AG04450 (cell line): ENCODE measurements at regions of chr6 and their contacts with region 1.

Region 1: DNA sequence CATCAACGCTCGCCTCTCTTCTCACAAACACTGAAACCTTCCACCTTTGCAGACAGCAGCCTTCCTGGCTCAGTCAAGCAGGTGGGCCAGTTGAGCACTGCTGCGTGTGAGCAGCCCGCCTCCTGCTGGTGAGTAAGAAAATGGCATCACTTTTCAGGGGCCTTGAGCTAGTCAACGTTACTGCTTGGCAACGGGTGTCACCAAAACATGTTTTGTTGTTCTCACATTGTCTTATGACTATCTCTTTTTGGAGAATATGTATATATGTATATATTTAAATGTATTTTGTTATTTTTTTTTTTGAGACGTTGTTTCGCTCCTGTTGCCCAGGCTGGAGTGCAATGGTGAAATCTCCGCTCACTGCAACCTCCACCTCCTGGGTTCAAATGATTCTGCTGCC is 97.0 kb upstream of the AGPAT4 start:
- DNase-seq: peak; percentile 42
- H3K4me3 ChIP-seq: no peak overlapping the region
- H3K27ac ChIP-seq: no peak overlapping the region
- H3K27me3 ChIP-seq: no peaks in the 10 kb centered on the region
- CTCF ChIP-seq: peak; percentile 96

Region 2: DNA sequence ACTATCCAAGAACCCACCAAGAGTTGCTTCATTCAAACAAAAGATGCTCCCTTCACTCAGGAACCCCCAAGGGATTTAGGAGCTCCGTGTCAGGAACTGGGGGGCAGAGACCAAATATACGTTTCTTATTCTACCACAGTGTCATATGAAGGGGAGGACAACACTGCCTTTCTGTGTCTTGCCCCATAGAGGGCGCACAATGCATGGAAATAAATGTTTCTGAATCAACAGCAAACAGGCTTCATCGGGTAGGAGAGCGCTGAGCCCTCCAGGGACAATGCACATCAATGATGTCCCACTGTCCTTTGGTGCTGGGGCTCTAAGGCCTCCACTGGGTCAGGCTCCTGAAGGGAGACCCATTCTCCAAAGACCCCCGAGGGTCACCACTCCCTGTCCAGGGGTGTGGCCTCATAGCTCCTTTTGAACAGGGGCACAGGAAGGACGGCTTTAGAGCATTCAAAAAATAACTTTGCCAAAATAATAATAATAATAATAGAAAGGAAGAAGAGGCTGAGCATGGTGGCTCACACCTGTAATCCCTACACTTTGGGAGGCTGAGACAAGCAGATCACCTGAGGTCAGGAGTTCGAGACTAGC is 637.7 kb before region 1 on chr6:
- CTCF ChIA-PET with region 1: interaction called, 53 read pairs
- POLR2A ChIA-PET with region 1: no interaction called
- DNase-seq: no peak
- H3K4me3 ChIP-seq: no peak overlapping the region
- H3K27ac ChIP-seq: no peak overlapping the region
- H3K27me3 ChIP-seq: no peaks in the 10 kb centered on the region
- CTCF ChIP-seq: peak; percentile 55

Region 3: DNA sequence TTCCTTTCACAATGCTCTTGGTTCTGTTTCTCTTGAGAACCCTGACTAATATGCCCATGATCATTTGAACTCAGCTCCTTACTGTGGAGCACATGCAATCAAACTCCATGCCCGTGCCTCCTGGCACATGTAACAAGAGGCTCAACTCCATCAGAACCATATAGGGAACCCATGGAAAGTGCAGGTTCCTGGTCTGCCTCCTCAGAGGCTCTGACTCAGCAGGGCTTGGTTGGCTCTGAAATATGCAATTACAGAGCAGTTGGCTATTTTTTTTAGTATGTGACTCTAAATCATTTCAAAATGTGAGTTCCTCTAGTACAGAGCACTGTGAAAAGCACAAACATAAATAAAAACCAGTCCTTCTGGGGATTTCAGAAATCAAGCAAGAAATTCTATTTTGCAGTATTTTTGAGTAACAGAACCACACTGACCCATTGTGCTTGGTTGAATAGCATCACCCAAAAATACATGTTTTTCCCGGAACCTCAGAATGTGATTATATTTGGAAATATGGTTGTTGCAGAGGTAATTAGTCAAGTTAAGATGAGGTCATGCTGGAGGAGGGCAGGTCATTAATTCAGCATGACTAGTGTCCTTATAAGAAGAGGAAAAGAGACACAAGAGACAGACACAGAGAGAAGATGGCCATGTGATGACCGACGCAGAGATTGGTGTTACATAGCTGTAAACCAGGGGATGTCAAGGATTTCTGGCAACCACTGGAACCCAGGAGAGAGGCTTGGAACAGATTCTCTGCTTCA is 392.6 kb before region 1 on chr6:
- CTCF ChIA-PET with region 1: interaction called, 11 read pairs
- POLR2A ChIA-PET with region 1: no interaction called
- DNase-seq: no peak
- H3K4me3 ChIP-seq: no peak overlapping the region
- H3K27ac ChIP-seq: peak overlapping the region; percentile 57
- H3K27me3 ChIP-seq: no peaks in the 10 kb centered on the region
- CTCF ChIP-seq: no peak

Region 4: GRCh38 chr6:161057103-161058091 is 313.5 kb before region 1 on chr6:
- CTCF ChIA-PET with region 1: interaction called, 10 read pairs
- POLR2A ChIA-PET with region 1: no interaction called
- DNase-seq: no peak
- H3K4me3 ChIP-seq: no peak overlapping the region
- H3K27ac ChIP-seq: no peak overlapping the region
- H3K27me3 ChIP-seq: no peaks in the 10 kb centered on the region
- CTCF ChIP-seq: no peak

Region 5: GRCh38 chr6:161128680-161129196 is 242.1 kb before region 1 on chr6:
- CTCF ChIA-PET with region 1: interaction called, 23 read pairs
- POLR2A ChIA-PET with region 1: no interaction called
- DNase-seq: peak; percentile 58
- H3K4me3 ChIP-seq: no peak overlapping the region
- H3K27ac ChIP-seq: no peak overlapping the region
- H3K27me3 ChIP-seq: no peaks in the 10 kb centered on the region
- CTCF ChIP-seq: no peak

Region 6: GRCh38 chr6:161207200-161207599 is 163.7 kb before region 1 on chr6:
- CTCF ChIA-PET with region 1: interaction called, 11 read pairs
- POLR2A ChIA-PET with region 1: no interaction called
- DNase-seq: no peak
- H3K4me3 ChIP-seq: no peak overlapping the region
- H3K27ac ChIP-seq: no peak overlapping the region
- H3K27me3 ChIP-seq: no peaks in the 10 kb centered on the region
- CTCF ChIP-seq: no peak

Region 7: DNA sequence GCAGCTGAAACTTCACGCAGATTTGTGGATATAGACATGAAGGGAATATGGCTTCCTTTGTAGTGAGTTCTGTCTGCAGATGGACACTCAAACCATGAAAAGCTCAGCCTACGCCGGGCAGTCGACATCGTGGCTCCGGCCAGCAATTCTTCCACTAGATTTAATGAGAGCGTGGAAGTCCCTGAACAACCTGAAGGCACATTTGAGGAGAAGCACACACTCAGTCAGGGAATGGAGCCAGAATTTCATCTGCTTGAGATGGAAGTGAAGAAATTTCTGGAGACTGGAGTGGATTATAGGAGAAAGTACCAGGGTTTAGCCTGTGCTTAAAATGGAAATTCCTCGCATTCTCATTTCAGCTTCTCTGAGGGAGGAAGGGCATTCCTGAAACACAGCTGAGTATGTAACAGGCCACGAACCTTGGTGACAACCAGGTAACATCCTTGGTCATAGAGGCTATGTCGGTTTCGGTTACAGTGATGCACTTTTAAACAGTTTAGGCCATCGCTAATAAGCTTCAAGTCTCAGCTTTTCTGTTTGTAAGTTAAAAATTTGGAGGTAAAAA is 16.5 kb before region 1 on chr6:
- CTCF ChIA-PET with region 1: interaction called, 15 read pairs
- POLR2A ChIA-PET with region 1: no interaction called
- DNase-seq: no peak
- H3K4me3 ChIP-seq: no peak overlapping the region
- H3K27ac ChIP-seq: no peak overlapping the region
- H3K27me3 ChIP-seq: no peaks in the 10 kb centered on the region
- CTCF ChIP-seq: no peak

Region 8: GRCh38 chr6:161639772-161640171 is 268.9 kb after region 1 on chr6:
- CTCF ChIA-PET with region 1: no interaction called
- POLR2A ChIA-PET with region 1: no interaction called
- DNase-seq: no peak
- H3K4me3 ChIP-seq: no peak overlapping the region
- H3K27ac ChIP-seq: no peak overlapping the region
- H3K27me3 ChIP-seq: no peaks in the 10 kb centered on the region
- CTCF ChIP-seq: no peak

Region 9: GRCh38 chr6:161727083-161727833 is 356.4 kb after region 1 on chr6:
- CTCF ChIA-PET with region 1: no interaction called
- POLR2A ChIA-PET with region 1: no interaction called
- DNase-seq: no peak
- H3K4me3 ChIP-seq: no peak overlapping the region
- H3K27ac ChIP-seq: no peak overlapping the region
- H3K27me3 ChIP-seq: no peaks in the 10 kb centered on the region
- CTCF ChIP-seq: no peak

Region 10: DNA sequence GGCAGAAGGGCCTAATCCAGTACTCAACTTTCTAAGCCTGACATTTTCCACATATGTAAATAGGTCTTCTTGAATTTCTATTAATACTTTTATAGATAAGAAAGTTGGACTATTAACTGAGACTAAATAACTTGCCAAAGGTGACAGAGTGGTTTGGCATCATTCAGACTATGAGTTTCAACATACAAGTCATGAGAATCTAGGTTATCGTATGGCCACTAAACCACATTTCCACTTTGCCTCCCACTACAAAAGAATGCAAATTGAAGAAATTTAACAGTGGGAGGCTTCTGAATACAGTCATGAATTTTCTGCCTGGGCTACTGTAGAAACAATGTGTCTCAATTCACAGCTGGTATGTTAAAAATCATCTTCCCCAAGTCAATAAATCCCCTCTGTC is 434.0 kb after region 1 on chr6:
- CTCF ChIA-PET with region 1: no interaction called
- POLR2A ChIA-PET with region 1: no interaction called
- DNase-seq: no peak
- H3K4me3 ChIP-seq: no peak overlapping the region
- H3K27ac ChIP-seq: no peak overlapping the region
- H3K27me3 ChIP-seq: no peaks in the 10 kb centered on the region
- CTCF ChIP-seq: no peak